ENCODE measurements at regions of chr7 and their contacts with region 1.

Region 1: DNA sequence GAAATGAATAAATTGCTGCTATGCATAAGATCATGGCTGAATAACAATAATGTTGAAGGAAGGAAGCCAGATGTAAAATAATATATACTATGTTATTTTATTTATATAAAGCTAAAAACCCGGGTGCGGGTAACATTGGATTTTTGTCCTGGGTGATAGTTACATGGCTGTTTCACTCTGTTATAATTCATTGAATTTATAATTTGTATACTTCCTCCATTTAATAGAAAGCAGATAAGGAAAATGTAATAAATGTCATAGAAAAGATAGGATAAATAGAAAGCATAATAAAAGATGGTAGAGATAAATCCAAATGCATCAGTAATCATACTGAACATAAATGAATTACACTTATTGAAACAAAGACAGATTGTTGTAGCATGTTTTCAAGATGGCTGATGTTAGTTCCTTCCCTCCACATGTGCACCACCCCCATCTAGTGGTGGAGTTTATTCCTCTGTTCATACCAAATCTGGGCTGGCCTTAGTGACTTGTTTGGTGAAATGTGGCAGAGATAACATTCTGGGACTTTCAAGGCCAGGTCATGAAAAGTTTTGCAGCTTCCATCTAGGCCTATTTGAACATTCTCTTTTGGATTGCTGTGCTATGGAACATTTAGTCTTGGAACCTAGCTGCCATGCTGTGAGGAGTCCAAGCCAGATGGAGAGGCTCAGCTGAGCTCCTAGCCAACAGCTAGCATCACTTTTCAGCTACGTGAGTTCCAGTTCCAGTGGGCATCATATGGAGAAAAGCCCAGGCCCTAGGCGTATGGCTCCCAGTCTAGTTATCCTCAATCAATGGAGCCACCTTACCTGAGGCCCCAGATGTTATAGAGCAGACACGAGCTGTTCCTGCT is 46.9 kb downstream of the AHCYL2 start:
- DNase-seq: peak; percentile 82
- ATAC-seq: peak; percentile 98
- H3K4me3 Mint-ChIP-seq: peak overlapping the region; percentile 61
- H3K27ac Mint-ChIP-seq: peak overlapping the region; percentile 61
- H3K4me1 Mint-ChIP-seq: peaks cover 3% of the 10 kb centered on the region
- H3K27me3 Mint-ChIP-seq: no peaks in the 10 kb centered on the region

Region 2: DNA sequence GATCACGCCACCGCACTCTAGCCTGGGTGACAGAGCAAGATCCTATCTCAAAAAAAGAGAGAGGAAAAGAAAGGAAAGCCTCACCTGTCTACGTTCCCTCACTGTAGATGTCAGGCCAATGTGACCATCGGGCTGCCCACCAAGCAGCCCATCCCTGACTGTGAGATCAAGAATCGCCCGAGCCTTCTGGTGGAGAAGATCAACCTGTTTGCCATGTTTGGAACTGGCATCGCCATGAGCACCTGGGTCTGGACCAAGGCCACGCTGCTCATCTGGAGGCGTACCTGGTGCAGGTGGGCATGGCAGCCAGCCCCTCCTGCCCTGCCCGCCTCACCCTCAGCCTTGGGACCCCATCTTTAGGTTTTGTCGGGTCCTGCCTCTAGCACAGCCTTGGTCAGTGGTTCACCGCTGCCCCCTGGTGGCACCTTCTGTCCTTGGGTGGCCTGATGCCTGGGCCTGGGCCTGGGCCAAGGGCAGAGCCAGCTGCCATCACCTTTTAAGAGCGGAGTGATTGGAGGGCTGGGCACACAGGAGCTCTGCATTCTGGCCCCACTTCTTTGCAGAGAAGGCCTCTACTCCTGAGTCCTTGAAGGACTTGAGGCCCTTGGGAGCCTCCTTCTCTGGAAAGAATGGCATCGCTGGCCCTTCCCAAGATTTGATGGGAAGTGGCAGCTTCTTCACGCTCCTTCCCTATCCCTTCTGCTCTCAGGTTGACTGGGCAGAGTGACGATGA is 61.3 kb before region 1 on chr7:
- CTCF ChIA-PET with region 1: interaction called, 11 read pairs
- POLR2A ChIA-PET with region 1: no interaction called
- DNase-seq: peak; percentile 78
- ATAC-seq: peak; percentile 88
- H3K4me3 Mint-ChIP-seq: no peak overlapping the region
- H3K27ac Mint-ChIP-seq: no peak overlapping the region
- H3K4me1 Mint-ChIP-seq: no peaks in the 10 kb centered on the region
- H3K27me3 Mint-ChIP-seq: peaks cover 5% of the 10 kb centered on the region

Region 3: DNA sequence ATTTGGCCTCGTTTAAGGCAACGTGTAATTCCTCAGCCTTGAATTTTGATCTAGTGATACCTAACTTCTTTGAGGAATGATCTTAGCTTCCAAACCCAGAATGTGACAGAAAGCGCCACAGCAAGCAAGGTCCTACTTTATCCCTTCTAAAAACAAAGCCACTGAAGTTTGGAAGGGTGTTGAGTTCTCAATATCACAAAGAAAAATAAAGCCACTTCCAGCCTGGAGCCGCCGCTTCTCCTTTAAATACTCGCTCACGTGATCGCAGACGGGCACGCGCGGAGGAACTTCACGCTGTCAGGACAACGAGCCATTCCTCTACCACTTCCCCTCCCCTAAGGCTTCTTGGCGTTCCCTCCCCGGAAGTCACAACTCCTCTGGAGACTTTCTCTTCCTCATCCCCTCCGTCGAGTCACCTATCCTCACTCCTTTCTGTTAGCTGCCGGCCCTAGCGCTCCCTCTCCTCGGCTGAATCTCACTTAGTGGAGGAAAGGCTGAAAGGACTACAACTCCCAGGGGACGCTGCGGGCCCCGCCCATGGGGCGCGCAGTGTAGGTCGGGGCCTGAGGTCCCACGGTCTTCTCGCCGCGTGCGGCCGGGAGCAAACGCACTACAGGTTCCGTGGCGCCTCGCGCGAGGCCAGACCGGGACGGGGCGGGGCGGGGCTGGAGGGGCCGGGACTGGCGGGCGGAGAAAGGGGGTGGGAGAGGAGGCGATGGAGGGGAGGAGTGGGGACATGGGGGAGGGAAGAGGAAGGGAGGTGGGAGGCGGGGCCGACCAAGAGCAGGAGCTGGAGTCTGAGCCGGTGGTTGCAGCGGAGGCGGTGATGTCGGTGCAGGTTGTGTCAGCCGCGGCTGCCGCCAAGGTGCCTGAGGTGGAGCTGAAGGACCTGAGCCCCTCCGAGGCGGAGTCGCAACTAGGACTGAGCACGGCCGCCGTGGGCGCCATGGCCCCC is 47.2 kb before region 1 on chr7 and contains the start of gene AHCYL2:
- CTCF ChIA-PET with region 1: interaction called, 156 read pairs
- POLR2A ChIA-PET with region 1: no interaction called
- DNase-seq: peak; percentile 98
- ATAC-seq: peak; percentile 95
- H3K4me3 Mint-ChIP-seq: peak within 1 kb of the TSS; percentile 85
- H3K27ac Mint-ChIP-seq: peak within 1 kb of the TSS; percentile 95
- H3K4me1 Mint-ChIP-seq: peaks cover 32% of the 10 kb centered on the region
- H3K27me3 Mint-ChIP-seq: no peaks in the 10 kb centered on the region
- total RNA-seq, gene AHCYL2: 7.3 to 7.6 TPM

Region 4: DNA sequence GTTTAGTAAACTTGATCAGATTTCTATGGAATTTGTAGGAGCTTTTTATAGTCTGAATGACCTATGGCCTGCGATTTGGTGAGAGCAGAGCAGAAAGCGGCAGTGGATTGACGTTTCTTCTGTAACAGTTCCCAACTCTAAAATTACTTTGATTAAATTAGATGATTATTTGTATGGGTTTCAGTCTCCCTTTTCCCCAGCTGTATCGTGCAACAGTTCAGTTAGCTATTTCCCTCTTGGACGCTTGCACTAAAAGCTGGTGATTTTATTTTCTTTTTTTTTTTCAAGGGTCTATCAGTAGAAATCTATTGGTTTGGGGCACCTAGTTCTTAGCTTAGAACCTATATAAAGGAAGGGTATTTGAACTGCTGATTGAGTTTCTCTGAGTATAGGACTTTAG is 40.1 kb before region 1 on chr7:
- CTCF ChIA-PET with region 1: interaction called, 107 read pairs
- POLR2A ChIA-PET with region 1: no interaction called
- DNase-seq: no peak
- ATAC-seq: no peak
- H3K4me3 Mint-ChIP-seq: no peak overlapping the region
- H3K27ac Mint-ChIP-seq: no peak overlapping the region
- H3K4me1 Mint-ChIP-seq: peaks cover under 1% of the 10 kb centered on the region
- H3K27me3 Mint-ChIP-seq: no peaks in the 10 kb centered on the region

Region 5: DNA sequence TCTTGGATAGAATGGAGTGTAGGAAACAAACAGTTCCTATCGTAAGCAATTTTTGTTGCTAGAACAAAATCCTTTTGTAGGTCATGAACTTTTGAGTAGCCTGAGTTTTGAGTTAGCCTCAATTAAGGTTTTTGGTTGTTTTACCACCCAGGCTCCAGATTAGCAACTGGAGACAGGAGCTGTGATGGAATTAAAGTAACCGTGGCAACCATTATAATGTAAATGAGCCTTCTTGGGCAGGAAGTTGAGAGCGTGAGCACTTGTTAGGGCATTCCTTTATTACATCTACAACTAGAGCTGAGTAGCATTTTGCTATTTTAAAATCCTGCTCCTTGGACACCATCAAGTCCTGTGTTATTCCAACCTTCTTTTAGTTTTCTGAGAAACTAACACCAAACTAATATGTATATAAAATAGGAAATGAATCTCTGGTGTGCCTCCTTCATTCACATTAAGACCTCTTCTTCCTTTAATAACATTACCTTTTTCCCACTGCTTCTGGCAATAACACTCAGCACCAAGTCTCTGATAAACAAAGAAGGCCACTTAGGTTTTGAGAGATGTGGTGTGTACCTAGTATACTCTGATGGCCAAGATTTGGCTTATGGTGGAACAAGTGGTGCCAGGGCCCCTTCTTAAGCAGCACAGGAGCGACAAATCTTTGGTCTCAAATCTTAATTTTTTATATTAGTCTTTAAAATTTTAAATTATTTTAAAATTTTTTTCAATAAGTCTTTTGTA is 12.9 kb before region 1 on chr7:
- CTCF ChIA-PET with region 1: interaction called, 19 read pairs
- POLR2A ChIA-PET with region 1: no interaction called
- DNase-seq: no peak
- ATAC-seq: peak; percentile 23
- H3K4me3 Mint-ChIP-seq: no peak overlapping the region
- H3K27ac Mint-ChIP-seq: no peak overlapping the region
- H3K4me1 Mint-ChIP-seq: peaks cover 18% of the 10 kb centered on the region
- H3K27me3 Mint-ChIP-seq: no peaks in the 10 kb centered on the region

Region 6: GRCh38 chr7:129285111-129285510 is 13.4 kb after region 1 on chr7:
- CTCF ChIA-PET with region 1: interaction called, 18 read pairs
- POLR2A ChIA-PET with region 1: interaction called, 4 read pairs
- DNase-seq: no peak
- ATAC-seq: no peak
- H3K4me3 Mint-ChIP-seq: no peak overlapping the region
- H3K27ac Mint-ChIP-seq: no peak overlapping the region
- H3K4me1 Mint-ChIP-seq: no peaks in the 10 kb centered on the region
- H3K27me3 Mint-ChIP-seq: no peaks in the 10 kb centered on the region

Region 7: GRCh38 chr7:129298268-129298893 is 26.7 kb after region 1 on chr7:
- CTCF ChIA-PET with region 1: interaction called, 31 read pairs
- POLR2A ChIA-PET with region 1: no interaction called
- DNase-seq: peak; percentile 71
- ATAC-seq: no peak
- H3K4me3 Mint-ChIP-seq: no peak overlapping the region
- H3K27ac Mint-ChIP-seq: no peak overlapping the region
- H3K4me1 Mint-ChIP-seq: no peaks in the 10 kb centered on the region
- H3K27me3 Mint-ChIP-seq: no peaks in the 10 kb centered on the region